ENCODE measurements at regions of chrX and their contacts with region 1.

Region 1: DNA sequence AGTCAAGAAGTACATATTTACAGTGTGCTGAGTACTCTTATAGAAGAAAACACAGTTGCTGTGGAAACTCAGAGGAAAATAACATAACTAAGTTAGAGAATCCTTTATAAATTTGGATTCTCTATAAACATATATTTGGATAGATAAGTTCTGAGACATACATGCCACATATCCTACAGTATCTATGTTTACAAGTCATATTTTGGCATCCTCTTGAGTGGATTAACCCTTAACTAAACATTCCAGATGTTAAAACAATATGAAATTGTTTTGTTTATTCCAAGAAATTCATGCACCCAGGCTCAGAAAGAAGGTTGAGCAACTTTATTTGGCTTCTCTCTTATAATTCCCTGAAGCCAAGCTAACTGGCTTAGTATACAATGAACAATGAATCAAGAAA is 267.2 kb downstream of the TEX13A start:
- DNase-seq: no peak
- H3K4me3 ChIP-seq: no peak overlapping the region
- H3K27ac ChIP-seq: no peak overlapping the region
- H3K4me1 ChIP-seq: no peaks in the 10 kb centered on the region
- H3K27me3 ChIP-seq: no peaks in the 10 kb centered on the region
- CTCF ChIP-seq: no peak
- POLR2A ChIP-seq: no peak

Region 2: GRCh38 chrX:105845631-105846030 is 892.4 kb after region 1 on chrX:
- intact Hi-C with region 1: loop called (anchors 10 kb)
- DNase-seq: no peak
- H3K4me3 ChIP-seq: no peak overlapping the region
- H3K27ac ChIP-seq: no peak overlapping the region
- H3K4me1 ChIP-seq: no peaks in the 10 kb centered on the region
- H3K27me3 ChIP-seq: no peaks in the 10 kb centered on the region
- CTCF ChIP-seq: no peak
- POLR2A ChIP-seq: no peak

Region 3: DNA sequence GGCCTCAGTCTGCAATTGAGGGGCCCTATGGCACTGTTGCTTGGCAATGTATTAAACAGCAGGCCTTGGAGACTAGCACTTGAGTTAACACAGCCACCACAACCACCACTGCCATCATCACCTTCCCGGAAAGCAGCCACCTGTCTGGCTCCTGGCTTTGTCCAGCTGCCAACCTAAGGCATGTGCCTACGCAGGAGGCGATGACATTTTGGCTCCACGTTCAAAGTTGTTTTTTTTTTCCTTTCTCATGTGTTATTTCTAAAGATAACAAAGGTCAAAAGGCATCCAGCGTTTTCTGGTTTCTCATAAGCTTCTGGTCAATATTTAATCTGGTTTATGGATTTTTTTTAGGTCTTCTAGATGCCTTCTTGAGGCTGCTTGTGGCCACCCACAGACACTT is 1974.4 kb after region 1 on chrX:
- intact Hi-C with region 1: no loop called
- DNase-seq: peak in 1 of 2 donors; percentile 43
- H3K4me3 ChIP-seq: no peak overlapping the region
- H3K27ac ChIP-seq: no peak overlapping the region
- H3K4me1 ChIP-seq: no peaks in the 10 kb centered on the region
- H3K27me3 ChIP-seq: no peaks in the 10 kb centered on the region
- CTCF ChIP-seq: no peak
- POLR2A ChIP-seq: no peak

Measured in vagina (tissue), 2 donors.